ENCODE measurements at regions of chr4 and their contacts with region 1.

Region 1: DNA sequence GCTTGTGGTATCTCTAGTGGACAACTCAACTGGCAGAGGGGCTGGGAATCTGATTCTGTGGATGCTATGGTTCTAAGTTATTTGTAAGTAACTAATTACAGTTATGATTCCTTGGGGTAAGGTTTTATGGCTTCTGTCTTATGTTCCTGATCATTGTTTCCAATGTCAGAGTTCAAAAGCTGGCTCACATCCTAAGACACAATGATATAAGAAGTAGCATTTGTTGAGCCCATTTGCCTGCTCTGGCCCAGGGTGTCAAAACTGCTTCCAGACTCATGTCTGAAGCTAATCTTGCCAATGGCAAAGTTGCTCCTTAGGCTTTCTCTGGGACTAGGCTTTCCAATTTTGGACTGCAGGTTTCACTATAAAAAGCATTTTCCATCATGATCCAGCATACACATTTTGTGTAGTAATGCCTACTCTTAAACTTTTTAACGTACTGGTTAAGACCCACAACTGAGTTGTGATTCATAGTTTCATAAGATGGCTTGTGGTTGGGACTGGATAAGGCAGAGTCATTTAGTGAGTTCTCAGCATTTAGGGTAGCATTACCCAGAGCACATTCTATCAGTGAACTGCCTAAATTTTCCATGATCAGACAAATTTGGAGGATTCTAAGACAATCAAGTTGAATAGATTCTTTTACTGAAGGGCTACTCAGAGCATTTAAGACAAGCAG is 50.0 kb downstream of the CCNI start:
- DNase-seq: peak; percentile 31
- H3K4me3 Mint-ChIP-seq: no peak overlapping the region
- H3K27ac Mint-ChIP-seq: no peak overlapping the region
- H3K4me1 Mint-ChIP-seq: peaks cover 39% of the 10 kb centered on the region
- H3K27me3 Mint-ChIP-seq: peaks cover 5% of the 10 kb centered on the region

Region 2: GRCh38 chr4:76301068-76301774 is 724.6 kb before region 1 on chr4:
- CTCF ChIA-PET with region 1: no interaction called
- intact Hi-C with region 1: loop called (anchors 1 kb)
- DNase-seq: peak; percentile 60
- H3K4me3 Mint-ChIP-seq: no peak overlapping the region
- H3K27ac Mint-ChIP-seq: no peak overlapping the region
- H3K4me1 Mint-ChIP-seq: peaks cover 23% of the 10 kb centered on the region
- H3K27me3 Mint-ChIP-seq: peaks cover 4% of the 10 kb centered on the region

Region 3: GRCh38 chr4:76738086-76738931 is 287.5 kb before region 1 on chr4:
- CTCF ChIA-PET with region 1: no interaction called
- intact Hi-C with region 1: loop called (anchors 1 kb)
- DNase-seq: peak; percentile 80
- H3K4me3 Mint-ChIP-seq: no peak overlapping the region
- H3K27ac Mint-ChIP-seq: peak overlapping the region; percentile 71
- H3K4me1 Mint-ChIP-seq: peaks cover 16% of the 10 kb centered on the region
- H3K27me3 Mint-ChIP-seq: no peaks in the 10 kb centered on the region

Region 4: GRCh38 chr4:76960014-76960413 is 65.8 kb before region 1 on chr4:
- CTCF ChIA-PET with region 1: interaction called, 3 read pairs
- intact Hi-C with region 1: loop called (anchors 1 kb)
- DNase-seq: peak; percentile 10
- H3K4me3 Mint-ChIP-seq: no peak overlapping the region
- H3K27ac Mint-ChIP-seq: no peak overlapping the region
- H3K4me1 Mint-ChIP-seq: peaks cover 19% of the 10 kb centered on the region
- H3K27me3 Mint-ChIP-seq: peaks cover 5% of the 10 kb centered on the region

Region 5: GRCh38 chr4:77001907-77002306 is 23.9 kb before region 1 on chr4:
- CTCF ChIA-PET with region 1: no interaction called
- intact Hi-C with region 1: loop called (anchors 1 kb)
- DNase-seq: no peak
- H3K4me3 Mint-ChIP-seq: no peak overlapping the region
- H3K27ac Mint-ChIP-seq: no peak overlapping the region
- H3K4me1 Mint-ChIP-seq: peaks cover 35% of the 10 kb centered on the region
- H3K27me3 Mint-ChIP-seq: no peaks in the 10 kb centered on the region

Region 6: DNA sequence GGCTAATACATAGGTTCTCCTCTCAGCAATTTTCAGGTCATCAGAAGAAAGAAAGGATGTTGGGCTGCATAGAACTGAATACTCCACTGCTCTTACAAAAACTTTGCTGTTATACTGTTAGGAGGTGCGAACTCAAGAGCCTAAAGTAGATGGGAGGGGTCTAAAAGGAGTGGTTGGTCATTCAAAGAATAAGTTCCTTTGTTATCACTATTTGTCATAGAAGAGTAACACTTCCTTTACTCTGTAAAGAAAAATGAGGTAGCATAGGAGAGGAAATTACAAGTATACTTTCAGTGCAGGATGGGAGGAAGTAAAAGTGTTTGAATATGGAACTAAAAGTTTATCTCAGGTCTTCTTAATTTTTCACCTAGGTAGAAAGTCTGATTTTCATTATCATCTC is 11.5 kb before region 1 on chr4:
- CTCF ChIA-PET with region 1: no interaction called
- intact Hi-C with region 1: loop called (anchors 1 kb)
- DNase-seq: no peak
- H3K4me3 Mint-ChIP-seq: no peak overlapping the region
- H3K27ac Mint-ChIP-seq: no peak overlapping the region
- H3K4me1 Mint-ChIP-seq: peaks cover 42% of the 10 kb centered on the region
- H3K27me3 Mint-ChIP-seq: no peaks in the 10 kb centered on the region

Region 7: GRCh38 chr4:77629885-77630284 is 604.1 kb after region 1 on chr4:
- CTCF ChIA-PET with region 1: no interaction called
- intact Hi-C with region 1: loop called (anchors 2 kb)
- DNase-seq: peak; percentile 37
- H3K4me3 Mint-ChIP-seq: no peak overlapping the region
- H3K27ac Mint-ChIP-seq: no peak overlapping the region
- H3K4me1 Mint-ChIP-seq: peaks cover 16% of the 10 kb centered on the region
- H3K27me3 Mint-ChIP-seq: no peaks in the 10 kb centered on the region